ENCODE measurements at regions of chr20 and their contacts with region 1.

Region 1: GRCh38 chr20:49541733-49542513 is 26.0 kb downstream of the PTGIS start:
- DNase-seq: peak; percentile 80
- CTCF ChIP-seq: peak; percentile 83

Region 2: GRCh38 chr20:49335476-49335875 is 206.4 kb before region 1 on chr20:
- CTCF ChIA-PET with region 1: interaction called, 11 read pairs
- POLR2A ChIA-PET with region 1: no interaction called
- DNase-seq: no peak
- CTCF ChIP-seq: no peak

Region 3: GRCh38 chr20:49446808-49447207 is 95.1 kb before region 1 on chr20:
- CTCF ChIA-PET with region 1: no interaction called
- POLR2A ChIA-PET with region 1: no interaction called
- DNase-seq: no peak
- CTCF ChIP-seq: no peak

Region 4: DNA sequence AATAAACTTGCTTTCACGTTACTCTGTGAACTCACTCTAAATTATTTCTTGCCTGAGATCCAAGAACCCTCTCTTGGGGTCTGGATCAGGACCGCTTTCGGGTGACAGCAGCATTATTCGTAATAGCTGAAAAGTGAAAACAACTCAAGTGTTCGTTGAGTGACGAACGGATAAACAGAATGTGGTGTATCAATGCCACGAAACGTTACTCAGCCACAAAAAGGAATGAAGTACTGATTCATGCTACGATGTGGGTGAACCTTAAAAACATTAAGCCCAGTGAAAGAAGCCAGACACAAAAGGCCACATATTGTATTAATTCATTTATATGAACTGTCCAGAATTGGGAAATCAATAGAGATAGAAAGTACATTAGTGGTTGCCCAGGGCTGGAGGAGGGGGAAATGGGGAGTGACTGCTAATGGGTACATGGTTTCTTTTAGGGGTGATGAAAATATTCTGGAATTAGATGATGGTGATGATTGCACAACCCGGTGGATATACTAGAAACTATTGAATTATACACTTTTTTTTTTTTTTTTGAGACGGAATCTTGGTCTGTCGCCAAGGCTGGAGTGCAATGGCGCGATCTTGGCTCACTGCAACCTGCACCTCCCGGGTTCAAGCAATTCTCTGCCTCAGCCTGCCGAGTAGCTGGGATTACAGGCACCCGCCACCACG is 17.6 kb after region 1 on chr20:
- CTCF ChIA-PET with region 1: interaction called, 41 read pairs
- POLR2A ChIA-PET with region 1: no interaction called
- DNase-seq: no peak
- CTCF ChIP-seq: no peak

Region 5: DNA sequence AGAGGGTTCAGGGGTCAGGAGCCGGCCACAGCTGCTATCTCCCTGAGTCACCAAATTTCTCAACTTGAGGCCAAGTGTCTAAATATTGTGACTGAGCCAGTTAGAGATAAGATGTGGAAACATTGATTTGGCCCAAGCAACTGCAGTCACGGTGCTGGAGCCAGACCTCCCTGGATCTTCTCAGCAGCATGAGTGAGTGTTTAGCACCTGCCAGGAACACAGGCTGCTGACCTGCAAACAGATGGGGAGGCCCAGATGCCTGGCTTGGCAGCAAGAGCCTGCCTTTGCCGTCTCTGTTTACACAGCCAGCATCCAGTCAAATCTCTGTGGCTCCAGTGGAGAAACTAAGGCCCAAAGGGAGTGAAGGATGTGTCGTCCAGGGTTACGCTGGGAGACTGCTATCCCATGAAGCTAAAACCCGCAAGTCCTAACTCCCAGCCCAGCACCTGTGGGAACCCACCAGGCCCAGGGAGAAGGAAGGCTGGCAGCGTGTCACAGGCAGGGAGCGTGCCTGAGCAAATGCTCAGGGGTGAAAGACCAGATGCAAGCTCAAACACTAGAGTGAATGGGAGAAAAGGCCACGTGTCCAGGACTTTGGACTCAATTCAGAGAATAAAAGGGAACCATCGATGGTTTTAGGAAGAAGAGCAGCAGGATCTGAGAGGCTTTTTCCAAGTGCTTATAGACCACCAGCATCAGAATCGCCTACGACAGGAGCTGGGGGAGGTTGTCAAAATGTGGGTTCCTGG is 41.9 kb after region 1 on chr20:
- CTCF ChIA-PET with region 1: interaction called, 18 read pairs
- POLR2A ChIA-PET with region 1: no interaction called
- DNase-seq: no peak
- CTCF ChIP-seq: no peak

Region 6: GRCh38 chr20:49594143-49594930 is 52.4 kb after region 1 on chr20:
- CTCF ChIA-PET with region 1: interaction called, 11 read pairs
- POLR2A ChIA-PET with region 1: no interaction called
- DNase-seq: no peak
- CTCF ChIP-seq: no peak

Region 7: GRCh38 chr20:49846206-49846807 is 304.4 kb after region 1 on chr20:
- CTCF ChIA-PET with region 1: interaction called, 21 read pairs
- POLR2A ChIA-PET with region 1: no interaction called
- DNase-seq: peak; percentile 71
- CTCF ChIP-seq: peak; percentile 46

Region 8: DNA sequence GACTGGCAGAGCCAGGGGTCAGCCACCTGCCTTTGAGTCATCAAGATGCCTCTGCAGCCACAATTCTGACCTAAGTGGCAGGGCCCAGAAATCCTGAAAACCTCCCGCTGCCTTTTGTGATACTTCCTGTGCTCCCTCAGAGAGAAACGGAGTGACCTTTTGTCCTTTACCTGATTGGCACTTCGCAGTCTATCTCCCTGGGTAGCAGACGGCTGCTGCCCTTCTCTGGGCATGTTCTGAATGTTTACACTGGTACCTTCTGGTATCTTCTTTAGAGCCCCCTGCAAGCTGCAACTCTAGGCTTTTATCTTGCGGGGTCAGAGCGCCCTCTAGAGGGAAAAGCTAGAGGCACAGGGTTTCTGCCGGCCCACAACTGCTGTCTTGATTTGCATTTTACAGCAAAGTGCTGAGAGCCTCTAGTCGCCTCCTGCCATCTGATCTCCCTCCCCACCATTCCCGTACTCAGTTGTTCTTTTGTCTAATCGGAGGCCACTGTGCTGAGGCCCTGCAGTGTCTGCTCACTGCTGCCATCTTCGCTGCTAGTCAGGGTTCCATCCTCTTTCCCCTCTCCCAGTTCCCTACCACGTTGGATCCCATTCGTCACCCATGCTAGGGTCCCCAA is 346.5 kb after region 1 on chr20:
- CTCF ChIA-PET with region 1: interaction called, 19 read pairs
- POLR2A ChIA-PET with region 1: no interaction called
- DNase-seq: peak; percentile 84
- CTCF ChIP-seq: peak; percentile 80

Measured in GM10248 (cell line).